ENCODE measurements at regions of chr2 and their contacts with region 1.

Region 1: DNA sequence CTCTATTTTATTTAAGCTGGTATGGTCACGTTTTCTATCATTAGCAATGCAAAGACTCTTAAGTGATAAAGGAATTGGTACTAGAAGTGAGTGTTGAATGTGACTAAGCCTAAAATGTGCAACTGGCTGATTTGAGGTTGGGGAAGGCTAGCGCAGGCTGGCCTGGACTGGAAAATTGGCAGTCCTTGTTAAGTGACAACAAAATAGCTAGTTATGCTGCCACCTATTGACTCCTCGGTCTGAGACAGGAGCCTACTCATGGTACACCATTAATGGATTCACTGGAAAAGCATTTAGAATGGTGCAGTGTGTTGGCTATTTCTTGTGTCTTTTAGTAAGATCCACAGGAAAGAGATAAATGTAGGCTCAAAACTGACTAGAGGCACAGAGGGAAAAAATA is 5.7 kb upstream of the WIPF1 start:
- DNase-seq: peak in 6 of 10 donors; percentile 34 to 76 (median 58)
- H3K4me3 ChIP-seq: peak overlapping the region in 1 of 59 donors; percentile 3
- H3K27ac ChIP-seq: peak overlapping the region in 50 of 59 donors; percentile 4 to 86 (median 71)
- H3K27me3 ChIP-seq: no peaks in the 10 kb centered on the region
- CTCF ChIP-seq: peak; percentile 24 to 85 (median 66)

Region 2: GRCh38 chr2:174465327-174465726 is 138.0 kb before region 1 on chr2:
- intact Hi-C with region 1: loop called in 1 of 2 experiments (anchors 10 kb)
- DNase-seq: no peak
- H3K4me3 ChIP-seq: no peak overlapping the region
- H3K27ac ChIP-seq: no peak overlapping the region
- H3K27me3 ChIP-seq: no peaks in the 10 kb centered on the region
- CTCF ChIP-seq: peak in 4 of 56 donors; percentile 10 to 28 (median 16)

Region 3: GRCh38 chr2:174487108-174487819 is 116.0 kb before region 1 on chr2:
- intact Hi-C with region 1: loop called in 1 of 2 experiments (anchors 10 kb)
- DNase-seq: peak; percentile 93 to 99 (median 98)
- H3K4me3 ChIP-seq: peak overlapping the region; percentile 67 to 99 (median 95)
- H3K27ac ChIP-seq: peak overlapping the region in 56 of 59 donors; percentile 13 to 95 (median 82)
- H3K27me3 ChIP-seq: no peaks in the 10 kb centered on the region
- CTCF ChIP-seq: peak in 2 of 56 donors; percentile 14 to 21

Region 4: DNA sequence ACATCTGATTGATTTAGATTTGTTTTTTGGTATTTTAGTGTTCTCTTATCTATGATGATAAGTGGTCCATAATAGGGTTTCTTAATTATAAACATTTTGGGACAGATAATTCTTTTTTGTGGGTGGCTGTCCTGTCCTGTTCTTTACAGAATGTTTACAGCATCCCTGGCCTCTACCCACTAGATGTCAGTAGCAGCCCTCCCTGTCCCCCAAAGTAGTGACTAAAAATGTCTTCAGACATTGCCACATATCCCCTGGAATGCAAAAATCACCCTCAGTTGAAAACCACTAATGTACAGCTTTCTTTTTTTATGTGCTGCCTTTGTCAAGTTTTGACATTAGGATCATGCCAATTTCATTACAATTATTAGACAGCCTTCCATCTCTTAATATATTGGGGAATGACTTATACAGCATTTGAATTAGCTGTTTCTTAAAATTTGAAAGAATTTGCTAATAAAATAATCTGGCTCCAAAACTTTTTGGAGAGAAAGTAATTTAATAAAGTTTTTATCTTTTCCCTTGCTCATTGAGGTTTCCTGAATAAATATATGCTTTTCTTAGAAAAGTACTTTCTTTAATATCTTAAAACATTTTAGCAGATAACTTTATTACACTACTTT is 25.2 kb before region 1 on chr2:
- intact Hi-C with region 1: loop called in 1 of 2 experiments (anchors 2 kb)
- DNase-seq: peak in 2 of 10 donors; percentile 45 to 68
- H3K4me3 ChIP-seq: no peak overlapping the region
- H3K27ac ChIP-seq: peak overlapping the region in 14 of 59 donors; percentile 3 to 94 (median 73)
- H3K27me3 ChIP-seq: no peaks in the 10 kb centered on the region
- CTCF ChIP-seq: peak in 55 of 56 donors; percentile 36 to 81 (median 58)

Region 5: GRCh38 chr2:174682578-174683391 is 79.5 kb after region 1 on chr2:
- intact Hi-C with region 1: loop called in 1 of 2 experiments (anchors 5 kb)
- DNase-seq: peak in 7 of 10 donors; percentile 51 to 79 (median 60)
- H3K4me3 ChIP-seq: peak overlapping the region; percentile 68 to 96 (median 87)
- H3K27ac ChIP-seq: peak overlapping the region in 56 of 59 donors; percentile 41 to 94 (median 83)
- H3K27me3 ChIP-seq: no peaks in the 10 kb centered on the region
- CTCF ChIP-seq: peak in 3 of 56 donors; percentile 14 to 37 (median 26)

Region 6: GRCh38 chr2:174827371-174828369 is 224.4 kb after region 1 on chr2:
- intact Hi-C with region 1: no loop called
- DNase-seq: no peak
- H3K4me3 ChIP-seq: peak overlapping the region in 24 of 59 donors; percentile 0 to 35 (median 18)
- H3K27ac ChIP-seq: peak overlapping the region in 55 of 59 donors; percentile 1 to 88 (median 62)
- H3K27me3 ChIP-seq: no peaks in the 10 kb centered on the region
- CTCF ChIP-seq: no peak

Measured in dorsolateral prefrontal cortex (tissue), 120 donors.